ENCODE measurements at regions of chr7 and their contacts with region 1.

Region 1: GRCh38 chr7:20219446-20220292 is 2.5 kb upstream of the MACC1 start:
- DNase-seq: peak; percentile 65
- ATAC-seq: peak; percentile 73
- H3K4me3 Mint-ChIP-seq: peak overlapping the region; percentile 33
- H3K27ac Mint-ChIP-seq: peak overlapping the region; percentile 95
- H3K4me1 Mint-ChIP-seq: peaks cover 73% of the 10 kb centered on the region
- H3K27me3 Mint-ChIP-seq: no peaks in the 10 kb centered on the region
- CTCF ChIP-seq: no peak

Region 2: GRCh38 chr7:18495412-18496340 is 1724.0 kb before region 1 on chr7 and contains the start of gene HDAC9:
- CTCF ChIA-PET with region 1: no interaction called
- POLR2A ChIA-PET with region 1: no interaction called
- intact Hi-C with region 1: loop called (anchors 5 kb)
- DNase-seq: peak; percentile 33
- ATAC-seq: peak; percentile 88
- H3K4me3 Mint-ChIP-seq: peak within 1 kb of the TSS; percentile 95
- H3K27ac Mint-ChIP-seq: peak within 1 kb of the TSS; percentile 95
- H3K4me1 Mint-ChIP-seq: peaks cover 53% of the 10 kb centered on the region
- H3K27me3 Mint-ChIP-seq: no peaks in the 10 kb centered on the region
- CTCF ChIP-seq: no peak
- total RNA-seq, gene HDAC9: 136 and 149 TPM in 2 replicates

Region 3: DNA sequence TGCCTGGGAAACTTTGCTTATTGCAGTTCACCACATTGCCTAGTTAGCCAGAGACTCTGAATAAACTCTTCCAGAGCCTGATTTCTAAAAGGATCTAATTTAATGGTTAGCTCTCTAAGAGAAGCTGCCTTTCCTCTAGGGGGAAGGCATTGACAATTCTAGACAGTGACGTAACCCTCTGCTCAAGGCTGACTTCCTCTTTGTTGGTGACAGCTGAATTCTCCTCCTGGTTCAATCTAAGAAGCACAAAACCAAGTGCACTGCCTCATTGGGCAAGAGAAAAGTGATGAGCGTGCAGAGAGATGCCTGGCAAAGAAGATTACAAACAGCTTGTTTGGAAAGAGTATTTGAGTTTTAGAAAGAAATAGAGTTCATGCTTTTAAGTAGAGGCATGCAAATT is 105.2 kb before region 1 on chr7:
- CTCF ChIA-PET with region 1: interaction called, 5 read pairs
- POLR2A ChIA-PET with region 1: interaction called, 9 read pairs
- intact Hi-C with region 1: loop called (anchors 1 kb)
- DNase-seq: no peak
- ATAC-seq: peak; percentile 90
- H3K4me3 Mint-ChIP-seq: peak overlapping the region; percentile 39
- H3K27ac Mint-ChIP-seq: peak overlapping the region; percentile 54
- H3K4me1 Mint-ChIP-seq: peaks cover 25% of the 10 kb centered on the region
- H3K27me3 Mint-ChIP-seq: no peaks in the 10 kb centered on the region
- CTCF ChIP-seq: no peak

Region 4: GRCh38 chr7:20199015-20199737 is 20.5 kb before region 1 on chr7:
- CTCF ChIA-PET with region 1: interaction called, 15 read pairs
- POLR2A ChIA-PET with region 1: interaction called, 13 read pairs
- intact Hi-C with region 1: loop called (anchors 1 kb)
- DNase-seq: peak; percentile 29
- ATAC-seq: peak; percentile 81
- H3K4me3 Mint-ChIP-seq: peak overlapping the region; percentile 69
- H3K27ac Mint-ChIP-seq: peak overlapping the region; percentile 94
- H3K4me1 Mint-ChIP-seq: peaks cover 55% of the 10 kb centered on the region
- H3K27me3 Mint-ChIP-seq: no peaks in the 10 kb centered on the region
- CTCF ChIP-seq: no peak

Region 5: GRCh38 chr7:20233362-20233761 is 13.7 kb after region 1 on chr7:
- CTCF ChIA-PET with region 1: interaction called, 16 read pairs
- POLR2A ChIA-PET with region 1: interaction called, 105 read pairs
- intact Hi-C with region 1: loop called (anchors 1 kb)
- DNase-seq: no peak
- ATAC-seq: peak; percentile 49
- H3K4me3 Mint-ChIP-seq: peak overlapping the region; percentile 3
- H3K27ac Mint-ChIP-seq: peak overlapping the region; percentile 25
- H3K4me1 Mint-ChIP-seq: peaks cover 44% of the 10 kb centered on the region
- H3K27me3 Mint-ChIP-seq: no peaks in the 10 kb centered on the region
- CTCF ChIP-seq: no peak

Region 6: DNA sequence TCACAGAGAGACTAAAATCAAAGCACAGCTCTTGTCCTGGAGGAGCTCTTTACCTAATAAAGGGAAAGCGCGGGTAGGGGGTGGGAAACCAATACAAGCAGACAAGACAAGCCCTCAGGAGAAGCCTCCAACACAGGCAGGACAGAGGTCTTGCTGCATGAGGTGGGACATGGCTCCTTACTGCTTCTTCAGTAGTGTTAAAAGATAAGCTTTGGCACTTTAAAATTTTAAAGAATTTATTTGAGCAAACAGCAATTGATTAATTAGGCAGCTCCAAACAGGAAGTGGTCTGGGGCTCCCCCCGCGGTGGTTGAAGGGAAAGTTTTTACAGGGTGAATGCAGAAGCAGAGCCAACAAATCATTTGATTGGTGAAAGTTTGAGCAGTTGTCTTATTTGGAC is 47.8 kb after region 1 on chr7:
- CTCF ChIA-PET with region 1: no interaction called
- POLR2A ChIA-PET with region 1: interaction called, 4 read pairs
- intact Hi-C with region 1: loop called (anchors 2 kb)
- DNase-seq: peak; percentile 21
- ATAC-seq: peak; percentile 56
- H3K4me3 Mint-ChIP-seq: no peak overlapping the region
- H3K27ac Mint-ChIP-seq: no peak overlapping the region
- H3K4me1 Mint-ChIP-seq: peaks cover 9% of the 10 kb centered on the region
- H3K27me3 Mint-ChIP-seq: no peaks in the 10 kb centered on the region
- CTCF ChIP-seq: no peak

Region 7: GRCh38 chr7:20330240-20330927 is 110.7 kb after region 1 on chr7 and contains the start of gene ITGB8:
- CTCF ChIA-PET with region 1: no interaction called
- POLR2A ChIA-PET with region 1: interaction called, 27 read pairs
- intact Hi-C with region 1: loop called (anchors 1 kb)
- DNase-seq: no peak
- ATAC-seq: peak; percentile 69
- H3K4me3 Mint-ChIP-seq: peak within 1 kb of the TSS; percentile 95
- H3K27ac Mint-ChIP-seq: peak within 1 kb of the TSS; percentile 84
- H3K4me1 Mint-ChIP-seq: peaks cover 37% of the 10 kb centered on the region
- H3K27me3 Mint-ChIP-seq: peaks cover 2% of the 10 kb centered on the region
- CTCF ChIP-seq: no peak
- total RNA-seq, gene ITGB8: 0.75 and 1.3 TPM in 2 replicates